ENCODE measurements at regions of chr6 and their contacts with region 1.

Region 1: GRCh38 chr6:85419046-85419759 is 30.7 kb upstream of the NT5E start:
- DNase-seq: no peak
- H3K4me3 ChIP-seq: no peak overlapping the region
- CTCF ChIP-seq: no peak

Region 2: DNA sequence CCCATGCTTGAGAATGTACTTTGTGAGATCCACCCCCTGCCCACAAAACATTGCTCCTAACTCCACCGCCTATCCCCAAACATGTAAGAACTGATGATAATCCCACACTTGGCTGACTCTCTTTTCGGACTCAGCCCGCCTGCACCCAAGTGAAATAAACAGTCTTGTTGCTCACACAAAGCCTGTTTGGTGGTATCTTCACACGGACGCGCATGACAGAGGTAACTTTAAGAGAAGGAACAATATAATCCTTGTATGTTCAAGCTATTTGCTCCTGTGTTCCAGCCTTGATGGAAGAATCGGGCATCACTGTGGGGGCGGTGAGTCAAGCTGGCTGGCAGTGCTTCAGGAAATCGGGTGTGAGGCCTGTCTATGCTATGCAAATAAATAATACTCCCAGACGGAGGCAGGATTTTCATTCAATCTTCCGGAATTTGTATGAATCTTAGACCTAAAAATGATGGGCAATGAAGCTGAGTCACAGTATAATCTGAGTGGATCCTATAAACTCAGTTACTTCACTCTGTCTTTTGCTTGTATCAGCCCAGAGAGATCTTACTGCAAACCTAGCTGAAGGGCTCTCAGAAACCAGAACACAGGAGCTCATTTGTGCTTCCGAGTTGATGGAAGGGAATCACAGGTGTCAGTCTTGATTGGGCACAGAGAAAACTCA is 14.6 kb before region 1 on chr6:
- CTCF ChIA-PET with region 1: interaction called, 9 read pairs
- POLR2A ChIA-PET with region 1: interaction called, 15 read pairs
- DNase-seq: peak; percentile 90
- H3K4me3 ChIP-seq: no peak overlapping the region; the same call in 1 of the 2 replicates
- CTCF ChIP-seq: no peak

Region 3: DNA sequence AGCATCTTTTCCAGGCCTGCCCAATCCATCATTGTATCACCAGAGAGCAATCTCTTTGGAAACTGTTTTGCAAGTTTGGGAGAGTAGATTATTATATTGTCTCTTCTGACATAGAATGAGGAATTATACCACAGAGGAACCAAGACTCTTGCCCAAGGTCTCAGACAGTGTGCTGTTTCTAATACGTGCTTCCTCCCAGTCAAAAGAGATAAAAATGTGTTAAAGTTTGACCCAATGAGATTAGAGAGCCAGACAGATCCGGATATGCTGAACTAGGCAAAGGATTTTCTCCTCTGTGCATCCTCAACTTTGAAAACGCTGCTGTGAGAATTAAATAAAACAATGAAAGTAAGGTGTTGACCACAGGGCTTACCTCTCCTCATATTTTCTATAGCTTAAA is 12.1 kb after region 1 on chr6:
- CTCF ChIA-PET with region 1: interaction called, 18 read pairs
- POLR2A ChIA-PET with region 1: no interaction called
- DNase-seq: no peak
- H3K4me3 ChIP-seq: no peak overlapping the region
- CTCF ChIP-seq: no peak

Region 4: DNA sequence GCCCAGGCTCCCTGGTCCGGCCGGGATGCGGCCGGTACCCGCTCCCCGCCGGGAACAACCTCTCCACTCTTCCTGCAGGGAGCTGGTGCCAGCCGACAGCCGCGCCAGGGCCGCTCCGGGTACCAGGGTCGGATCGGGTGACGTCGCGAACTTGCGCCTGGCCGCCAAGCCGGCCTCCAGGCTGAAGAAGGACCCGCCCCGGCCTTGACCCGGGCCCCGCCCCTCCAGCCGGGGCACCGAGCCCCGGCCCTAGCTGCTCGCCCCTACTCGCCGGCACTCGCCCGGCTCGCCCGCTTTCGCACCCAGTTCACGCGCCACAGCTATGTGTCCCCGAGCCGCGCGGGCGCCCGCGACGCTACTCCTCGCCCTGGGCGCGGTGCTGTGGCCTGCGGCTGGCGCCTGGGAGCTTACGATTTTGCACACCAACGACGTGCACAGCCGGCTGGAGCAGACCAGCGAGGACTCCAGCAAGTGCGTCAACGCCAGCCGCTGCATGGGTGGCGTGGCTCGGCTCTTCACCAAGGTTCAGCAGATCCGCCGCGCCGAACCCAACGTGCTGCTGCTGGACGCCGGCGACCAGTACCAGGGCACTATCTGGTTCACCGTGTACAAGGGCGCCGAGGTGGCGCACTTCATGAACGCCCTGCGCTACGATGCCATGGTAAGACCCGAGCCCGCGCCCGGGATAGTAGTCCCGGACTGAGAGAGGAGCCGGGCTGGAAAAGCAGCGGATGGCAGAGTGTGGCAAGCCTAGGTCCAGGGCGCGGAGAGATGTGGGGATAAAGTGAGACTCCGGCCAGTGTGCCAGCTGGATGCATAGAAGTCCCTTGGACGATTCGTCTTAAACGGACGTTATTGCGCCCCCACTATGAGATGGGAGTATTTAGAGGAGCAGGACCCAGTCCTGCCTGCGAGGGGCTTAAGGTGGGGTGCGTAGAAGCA is 30.9 kb after region 1 on chr6 and contains the start of gene NT5E:
- CTCF ChIA-PET with region 1: interaction called, 5 read pairs
- POLR2A ChIA-PET with region 1: interaction called, 16 read pairs
- DNase-seq: no peak
- H3K4me3 ChIP-seq: peak within 1 kb of the TSS; percentile 78
- CTCF ChIP-seq: peak; percentile 9

Region 5: GRCh38 chr6:86152546-86152945 is 733.3 kb after region 1 on chr6:
- CTCF ChIA-PET with region 1: no interaction called
- POLR2A ChIA-PET with region 1: no interaction called
- DNase-seq: no peak
- H3K4me3 ChIP-seq: no peak overlapping the region
- CTCF ChIP-seq: no peak